WTC11 (cell line): ENCODE measurements at regions of chr9 and their contacts with region 1.

Region 1: DNA sequence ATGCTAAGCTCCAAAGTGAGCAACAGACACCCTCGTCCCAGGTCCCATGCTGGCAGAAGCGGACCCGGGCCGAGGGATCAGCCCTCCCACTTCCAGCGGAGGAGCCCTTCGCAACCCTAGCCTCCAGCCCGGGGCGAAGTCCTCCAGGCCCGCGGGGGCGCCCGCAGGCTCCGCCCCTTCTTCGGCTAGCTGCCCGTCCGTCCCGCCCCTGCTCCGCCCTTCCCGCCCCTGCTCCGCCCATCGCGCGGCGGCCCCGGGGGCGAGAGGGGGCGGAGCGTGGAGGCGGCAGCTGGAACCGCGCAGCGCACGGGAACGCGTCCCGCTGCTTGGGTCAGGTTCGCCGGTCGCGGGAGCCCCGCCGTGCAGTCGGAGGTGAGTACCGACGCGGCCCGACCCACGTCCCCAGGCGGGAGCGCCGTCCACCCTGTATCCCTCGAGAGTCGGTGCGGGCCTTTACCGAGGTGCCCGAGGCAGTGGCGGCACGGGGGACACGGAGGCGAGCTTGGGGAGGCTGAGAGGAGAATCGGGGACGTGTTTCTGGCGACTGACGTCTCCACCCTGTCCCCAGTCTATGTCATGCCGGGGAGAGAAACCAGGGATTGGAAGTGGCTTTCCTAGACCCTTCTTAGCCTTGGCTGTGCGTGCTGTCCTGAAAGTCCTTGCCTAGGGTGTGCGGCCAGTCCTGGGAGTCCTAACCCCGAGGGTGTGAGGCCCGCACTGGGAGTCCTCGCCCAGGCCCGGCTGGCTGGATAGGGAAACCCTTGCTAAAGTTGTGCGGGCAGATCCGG is at the start of gene ACO1:
- DNase-seq: peak; percentile 92
- ATAC-seq: peak; percentile 94
- H3K4me3 Mint-ChIP-seq: peak within 1 kb of the TSS; percentile 86
- H3K27ac Mint-ChIP-seq: no peak within 1 kb of the TSS
- H3K4me1 Mint-ChIP-seq: peaks cover 18% of the 10 kb centered on the region
- H3K27me3 Mint-ChIP-seq: peaks cover 31% of the 10 kb centered on the region
- CTCF ChIP-seq: no peak
- total RNA-seq, gene ACO1: 40.2 to 44.8 TPM (median 44.5 TPM) in 3 replicates

Region 2: DNA sequence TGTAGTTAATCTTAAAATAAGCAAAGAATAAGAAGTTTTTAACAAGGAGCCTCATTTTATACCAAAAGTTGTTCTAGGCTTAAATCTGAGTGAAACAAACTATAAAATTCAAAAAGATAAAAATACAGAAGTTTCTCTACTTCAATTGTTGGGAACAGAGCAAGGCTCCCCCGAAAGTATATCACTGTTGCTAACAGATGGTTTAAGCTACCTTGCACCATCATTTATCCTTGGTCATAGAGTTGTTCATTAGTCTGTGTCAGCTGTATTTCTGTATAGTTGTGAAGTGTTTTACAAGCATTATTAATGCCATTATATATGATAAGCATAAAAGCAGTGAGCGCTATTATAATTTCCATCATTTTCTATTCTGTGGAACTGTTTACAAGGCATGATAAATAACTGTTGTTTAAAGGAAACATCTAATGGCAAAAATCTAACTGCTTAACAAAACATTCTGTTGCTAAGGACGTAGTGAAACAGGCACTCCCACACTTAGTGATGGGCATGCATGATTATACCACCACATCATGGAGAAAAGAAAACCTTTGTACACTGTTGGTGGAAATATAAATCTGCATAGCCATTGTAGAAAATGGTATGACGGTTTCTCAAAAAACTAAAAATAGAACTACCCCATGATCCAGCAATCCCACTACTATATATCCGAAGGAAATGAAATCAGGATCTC is 23.4 kb before region 1 on chr9:
- CTCF ChIA-PET with region 1: no interaction called
- POLR2A ChIA-PET with region 1: no interaction called
- DNase-seq: no peak
- ATAC-seq: no peak
- H3K4me3 Mint-ChIP-seq: no peak overlapping the region
- H3K27ac Mint-ChIP-seq: no peak overlapping the region
- H3K4me1 Mint-ChIP-seq: no peaks in the 10 kb centered on the region
- H3K27me3 Mint-ChIP-seq: no peaks in the 10 kb centered on the region
- CTCF ChIP-seq: no peak

Region 3: GRCh38 chr9:32395490-32396216 is 11.1 kb after region 1 on chr9:
- CTCF ChIA-PET with region 1: interaction called, 10 read pairs
- POLR2A ChIA-PET with region 1: interaction called, 3 read pairs
- DNase-seq: no peak
- ATAC-seq: peak; percentile 76
- H3K4me3 Mint-ChIP-seq: no peak overlapping the region
- H3K27ac Mint-ChIP-seq: peak overlapping the region; percentile 57; the same call in 1 of the 2 replicates
- H3K4me1 Mint-ChIP-seq: peaks cover 38% of the 10 kb centered on the region
- H3K27me3 Mint-ChIP-seq: no peaks in the 10 kb centered on the region
- CTCF ChIP-seq: no peak

Region 4: GRCh38 chr9:32431940-32432555 is 47.5 kb after region 1 on chr9:
- CTCF ChIA-PET with region 1: interaction called, 56 read pairs
- POLR2A ChIA-PET with region 1: no interaction called
- DNase-seq: peak; percentile 51
- ATAC-seq: peak; percentile 81
- H3K4me3 Mint-ChIP-seq: no peak overlapping the region
- H3K27ac Mint-ChIP-seq: no peak overlapping the region
- H3K4me1 Mint-ChIP-seq: no peaks in the 10 kb centered on the region
- H3K27me3 Mint-ChIP-seq: no peaks in the 10 kb centered on the region
- CTCF ChIP-seq: peak; percentile 65

Region 5: DNA sequence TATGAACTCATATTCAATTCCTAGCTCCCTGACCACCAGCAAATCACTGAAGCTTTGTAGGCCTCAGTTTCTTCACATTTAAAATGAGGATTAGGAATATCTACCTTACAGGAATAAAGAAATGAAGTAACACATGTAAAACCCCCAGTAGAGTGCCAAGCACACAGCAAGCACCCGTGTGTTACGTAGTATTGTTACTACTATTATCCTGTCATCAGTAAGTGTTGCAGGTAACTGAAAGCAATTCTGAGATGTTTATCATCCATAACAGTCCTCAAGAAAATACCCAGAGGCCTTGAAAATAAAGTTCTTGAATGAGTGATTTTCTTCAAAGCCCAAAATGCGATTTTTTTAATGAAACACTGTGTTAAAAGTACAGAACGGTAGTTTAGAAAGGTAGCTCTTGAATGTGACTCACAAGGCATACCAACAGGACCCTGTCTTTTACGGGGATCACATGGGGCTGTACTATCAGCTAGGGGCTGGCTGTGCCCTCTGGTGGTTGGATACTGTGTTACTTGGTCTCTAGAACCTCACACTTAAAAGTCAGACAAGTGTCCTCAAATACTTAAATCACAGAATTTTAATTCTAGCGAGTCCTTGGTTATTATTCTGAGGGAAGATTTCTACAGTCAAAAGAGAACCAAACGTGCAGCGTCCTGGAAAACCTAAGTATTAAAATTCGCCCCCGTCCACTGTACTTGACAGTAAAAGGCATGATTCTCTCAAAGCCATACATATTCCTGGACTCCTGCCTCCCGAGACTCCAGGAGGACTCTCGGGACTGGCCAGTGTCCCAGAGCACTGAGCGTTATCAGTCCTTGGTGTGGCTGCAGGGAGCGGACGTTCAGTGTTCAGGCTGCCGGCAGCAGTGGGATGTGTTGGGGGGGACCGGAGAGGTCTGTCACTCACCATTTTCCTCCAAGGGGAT is 187.7 kb after region 1 on chr9:
- CTCF ChIA-PET with region 1: interaction called, 245 read pairs
- POLR2A ChIA-PET with region 1: interaction called, 5 read pairs
- DNase-seq: peak; percentile 68
- ATAC-seq: peak; percentile 89
- H3K4me3 Mint-ChIP-seq: peak overlapping the region; percentile 99
- H3K27ac Mint-ChIP-seq: peak overlapping the region; percentile 99
- H3K4me1 Mint-ChIP-seq: peaks cover 11% of the 10 kb centered on the region
- H3K27me3 Mint-ChIP-seq: no peaks in the 10 kb centered on the region
- CTCF ChIP-seq: peak; percentile 18; the same call in 1 of the 2 replicates

Region 6: DNA sequence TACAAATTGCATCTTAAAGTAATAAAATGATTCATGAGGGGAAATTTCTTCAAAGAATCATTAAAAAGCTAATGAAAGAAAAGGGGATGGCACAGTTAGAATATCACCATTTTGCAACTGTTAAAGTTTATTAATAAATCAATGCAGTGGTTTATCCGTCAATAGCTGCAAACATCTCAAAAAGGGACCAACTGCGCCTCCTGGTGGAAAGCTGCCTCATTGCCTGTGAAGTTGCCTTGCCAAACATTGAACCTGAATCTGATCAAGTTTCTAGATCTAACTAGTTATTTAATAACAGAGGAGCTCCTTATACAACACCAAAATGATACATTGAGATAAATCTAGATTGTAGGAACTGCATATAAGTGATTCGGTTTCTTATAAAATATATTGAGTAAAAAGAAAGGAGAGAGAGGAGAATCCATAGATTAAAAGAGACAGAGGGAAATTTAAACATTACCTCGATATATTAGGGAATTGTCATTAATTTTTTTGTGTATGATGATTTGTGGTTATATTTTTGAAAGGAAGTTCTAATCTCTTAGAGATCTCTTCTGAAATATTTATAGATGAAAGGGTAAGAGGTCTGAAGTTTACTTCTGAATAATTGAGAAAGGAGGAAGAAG is 195.3 kb after region 1 on chr9:
- CTCF ChIA-PET with region 1: interaction called, 245 read pairs
- POLR2A ChIA-PET with region 1: interaction called, 3 read pairs
- DNase-seq: peak; percentile 76
- ATAC-seq: no peak
- H3K4me3 Mint-ChIP-seq: no peak overlapping the region
- H3K27ac Mint-ChIP-seq: no peak overlapping the region
- H3K4me1 Mint-ChIP-seq: peaks cover 11% of the 10 kb centered on the region
- H3K27me3 Mint-ChIP-seq: no peaks in the 10 kb centered on the region
- CTCF ChIP-seq: peak; percentile 85